ENCODE measurements at regions of chr7 and their contacts with region 1.

Region 1: DNA sequence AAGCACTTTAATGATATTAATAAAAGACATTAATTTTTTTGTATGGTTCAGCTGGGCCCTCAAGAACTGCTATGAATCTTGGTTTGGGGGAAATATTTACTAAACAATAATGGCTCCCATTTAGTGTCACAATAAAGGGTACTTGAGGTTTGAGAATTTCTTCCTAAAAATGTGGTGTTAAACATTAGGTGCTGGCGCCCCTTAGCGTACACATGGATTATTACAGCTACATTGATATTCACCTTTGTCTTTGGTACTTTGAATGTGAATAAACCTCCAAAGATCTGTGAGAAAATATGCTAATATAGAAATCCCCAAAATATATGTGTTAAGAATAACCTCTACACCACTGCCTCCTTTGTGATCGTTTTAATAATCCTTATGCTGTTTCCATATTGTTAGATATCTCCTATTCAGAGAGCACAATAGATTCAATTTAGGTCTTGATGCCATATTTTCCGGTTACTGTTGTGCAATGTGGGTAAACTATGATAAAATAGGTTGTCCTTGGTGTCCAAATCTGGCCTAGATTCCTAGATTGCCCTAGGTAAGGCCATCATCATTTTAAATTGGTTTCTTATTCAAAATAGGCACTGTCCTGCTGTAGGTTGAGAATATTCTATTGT is 161.8 kb upstream of the CACNA2D1 start:
- DNase-seq: peak; percentile 22 to 68
- ATAC-seq: peak in 1 of 2 experiments; percentile 48; a peak in 3 of 6 replicates
- H3K4me3 ChIP-seq: no peak overlapping the region
- H3K27ac ChIP-seq: no peak overlapping the region
- H3K4me1 ChIP-seq: 0 out of 3 replicates have a peak, but pooled peaks cover 2% of the 10 kb centered on the region
- CTCF ChIP-seq: peak; percentile 88
- EP300 ChIP-seq: no peak
- POLR2A ChIP-seq: no peak
- RAD21 ChIP-seq: peak; percentile 86

Region 2: GRCh38 chr7:82044497-82045080 is 560.8 kb before region 1 on chr7:
- CTCF ChIA-PET with region 1: interaction called, 11 read pairs
- POLR2A ChIA-PET with region 1: no interaction called
- DNase-seq: peak in 1 of 2 experiments; percentile 66
- ATAC-seq: peak in 1 of 2 experiments; percentile 22; a peak in 1 of 6 replicates
- H3K4me3 ChIP-seq: no peak overlapping the region
- H3K27ac ChIP-seq: peak overlapping the region in 1 of 2 experiments; percentile 24; a peak in 4 of 6 replicates
- H3K4me1 ChIP-seq: peaks cover 29% of the 10 kb centered on the region
- CTCF ChIP-seq: peak; percentile 94
- EP300 ChIP-seq: no peak
- POLR2A ChIP-seq: no peak
- RAD21 ChIP-seq: peak; percentile 92 to 98

Region 3: DNA sequence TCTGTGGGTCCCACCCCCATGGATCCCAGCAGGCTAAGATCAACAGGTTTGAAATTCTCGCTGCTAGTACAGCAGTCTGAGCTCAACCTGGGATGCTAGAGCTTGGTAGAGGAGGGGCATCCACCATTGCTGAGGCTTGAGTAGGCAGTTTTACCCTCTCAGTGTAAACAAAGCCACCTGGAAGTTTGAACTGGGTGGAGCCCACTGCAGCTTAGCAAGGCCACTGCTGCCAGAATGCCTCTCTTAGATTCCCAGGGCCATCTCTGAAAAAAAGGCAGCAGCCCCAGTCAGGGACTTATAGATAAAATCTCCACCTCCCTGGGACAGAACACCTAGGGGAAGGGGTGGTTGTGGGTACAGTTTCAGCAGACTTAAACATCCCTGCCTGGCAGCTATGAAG is 28.2 kb after region 1 on chr7:
- CTCF ChIA-PET with region 1: interaction called, 10 read pairs
- POLR2A ChIA-PET with region 1: no interaction called
- DNase-seq: no peak
- ATAC-seq: no peak
- H3K4me3 ChIP-seq: no peak overlapping the region
- H3K27ac ChIP-seq: no peak overlapping the region
- H3K4me1 ChIP-seq: no peaks in the 10 kb centered on the region
- CTCF ChIP-seq: no peak
- EP300 ChIP-seq: no peak
- POLR2A ChIP-seq: no peak
- RAD21 ChIP-seq: no peak

Region 4: GRCh38 chr7:82745117-82745516 is 139.8 kb after region 1 on chr7:
- CTCF ChIA-PET with region 1: no interaction called
- POLR2A ChIA-PET with region 1: no interaction called
- DNase-seq: no peak
- ATAC-seq: no peak
- H3K4me3 ChIP-seq: no peak overlapping the region
- H3K27ac ChIP-seq: no peak overlapping the region
- H3K4me1 ChIP-seq: no peaks in the 10 kb centered on the region
- CTCF ChIP-seq: no peak
- EP300 ChIP-seq: no peak
- POLR2A ChIP-seq: no peak
- RAD21 ChIP-seq: no peak

Region 5: GRCh38 chr7:82810558-82811259 is 205.3 kb after region 1 on chr7:
- CTCF ChIA-PET with region 1: no interaction called
- POLR2A ChIA-PET with region 1: no interaction called
- DNase-seq: peak; percentile 34 to 63
- ATAC-seq: peak; percentile 83 to 90
- H3K4me3 ChIP-seq: no peak overlapping the region
- H3K27ac ChIP-seq: no peak overlapping the region
- H3K4me1 ChIP-seq: peaks cover 2% of the 10 kb centered on the region
- CTCF ChIP-seq: peak; percentile 87
- EP300 ChIP-seq: no peak
- POLR2A ChIP-seq: no peak
- RAD21 ChIP-seq: peak; percentile 62 to 66

Region 6: GRCh38 chr7:83326199-83326598 is 720.8 kb after region 1 on chr7:
- CTCF ChIA-PET with region 1: no interaction called
- POLR2A ChIA-PET with region 1: no interaction called
- DNase-seq: no peak
- ATAC-seq: 0 out of 6 replicates have a peak, but pooled peaks of 1 of the 2 experiments have one; percentile 39
- H3K4me3 ChIP-seq: no peak overlapping the region
- H3K27ac ChIP-seq: no peak overlapping the region
- H3K4me1 ChIP-seq: no peaks in the 10 kb centered on the region
- CTCF ChIP-seq: no peak
- EP300 ChIP-seq: no peak
- POLR2A ChIP-seq: no peak
- RAD21 ChIP-seq: no peak